T-cell (primary cell): ENCODE measurements at regions of chr6 and their contacts with region 1.

Region 1: GRCh38 chr6:111716325-111716724 is 110.6 kb upstream of the TRAF3IP2 start:
- DNase-seq: no peak
- ATAC-seq: no peak
- H3K4me3 ChIP-seq: no peak overlapping the region
- H3K4me3 Mint-ChIP-seq: no peak overlapping the region
- H3K27ac ChIP-seq: peak overlapping the region; percentile 67
- H3K27ac Mint-ChIP-seq: peak overlapping the region; percentile 78 to 79
- H3K4me1 ChIP-seq: peaks cover 33 to 63% of the 10 kb centered on the region in 2 experiments
- H3K4me1 Mint-ChIP-seq: peaks cover 64 to 84% (median 83%) of the 10 kb centered on the region in 3 donors
- H3K27me3 ChIP-seq: no peaks in the 10 kb centered on the region
- H3K27me3 Mint-ChIP-seq: no peaks in the 10 kb centered on the region

Region 2: GRCh38 chr6:111818539-111819226 is 102.4 kb after region 1 on chr6:
- CTCF ChIA-PET with region 1: no interaction called
- POLR2A ChIA-PET with region 1: no interaction called
- DNase-seq: peak in 1 of 35 experiments; percentile 43
- ATAC-seq: peak; percentile 46 to 69 (median 60)
- H3K4me3 ChIP-seq: no peak overlapping the region
- H3K4me3 Mint-ChIP-seq: peak overlapping the region; percentile 10 to 52 (median 32)
- H3K27ac ChIP-seq: peak overlapping the region; percentile 40
- H3K27ac Mint-ChIP-seq: peak overlapping the region; percentile 71 to 89
- H3K4me1 ChIP-seq: peaks cover 29 to 33% of the 10 kb centered on the region in 2 experiments
- H3K4me1 Mint-ChIP-seq: peaks cover 63 to 76% (median 71%) of the 10 kb centered on the region in 3 donors
- H3K27me3 ChIP-seq: no peaks in the 10 kb centered on the region
- H3K27me3 Mint-ChIP-seq: no peaks in the 10 kb centered on the region

Region 3: GRCh38 chr6:111985202-111985731 is 268.9 kb after region 1 on chr6:
- CTCF ChIA-PET with region 1: no interaction called
- POLR2A ChIA-PET with region 1: no interaction called
- DNase-seq: peak in 7 of 35 experiments; percentile 5 to 67 (median 21)
- ATAC-seq: peak; percentile 28 to 65 (median 56)
- H3K4me3 ChIP-seq: no peak overlapping the region
- H3K4me3 Mint-ChIP-seq: peak overlapping the region in 2 of 3 donors; percentile 2 to 32
- H3K27ac ChIP-seq: peak overlapping the region; percentile 50
- H3K27ac Mint-ChIP-seq: peak overlapping the region; percentile 51 to 86
- H3K4me1 ChIP-seq: peaks cover 58 to 65% of the 10 kb centered on the region in 2 experiments
- H3K4me1 Mint-ChIP-seq: peaks cover 90 to 95% (median 91%) of the 10 kb centered on the region in 3 donors
- H3K27me3 ChIP-seq: no peaks in the 10 kb centered on the region
- H3K27me3 Mint-ChIP-seq: no peaks in the 10 kb centered on the region

Region 4: DNA sequence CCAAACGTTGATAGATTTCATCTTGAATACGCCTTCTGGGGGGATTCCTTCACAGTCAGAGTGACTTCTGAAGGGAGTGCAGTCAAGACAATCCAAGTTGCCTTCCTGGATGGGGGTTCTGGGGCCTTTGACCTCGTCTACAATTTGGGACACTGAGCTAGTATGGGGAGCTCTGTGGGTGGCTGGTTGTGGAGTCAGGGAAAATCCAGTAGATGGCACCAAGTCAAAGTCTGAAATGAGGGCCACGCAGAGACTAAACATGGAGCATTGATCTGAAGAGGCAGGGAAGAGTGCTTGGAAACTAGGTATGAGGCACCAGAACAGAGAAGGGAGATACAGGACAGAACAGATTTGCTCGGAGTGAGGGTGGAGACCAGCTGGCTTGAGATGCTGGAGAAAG is 294.0 kb after region 1 on chr6:
- CTCF ChIA-PET with region 1: interaction called in 1 of 2 experiments, 7 read pairs
- POLR2A ChIA-PET with region 1: interaction called in 1 of 2 experiments, 10 read pairs
- DNase-seq: peak in 2 of 35 experiments; percentile 43 to 58
- ATAC-seq: peak; percentile 73 to 89 (median 86)
- H3K4me3 ChIP-seq: no peak overlapping the region
- H3K4me3 Mint-ChIP-seq: no peak overlapping the region
- H3K27ac ChIP-seq: no peak overlapping the region
- H3K27ac Mint-ChIP-seq: peak overlapping the region in 1 of 2 donors; percentile 2
- H3K4me1 ChIP-seq: peaks cover 2 to 3% of the 10 kb centered on the region in 2 experiments
- H3K4me1 Mint-ChIP-seq: peaks cover 9 to 13% (median 9%) of the 10 kb centered on the region in 3 donors
- H3K27me3 ChIP-seq: no peaks in the 10 kb centered on the region
- H3K27me3 Mint-ChIP-seq: no peaks in the 10 kb centered on the region

Region 5: DNA sequence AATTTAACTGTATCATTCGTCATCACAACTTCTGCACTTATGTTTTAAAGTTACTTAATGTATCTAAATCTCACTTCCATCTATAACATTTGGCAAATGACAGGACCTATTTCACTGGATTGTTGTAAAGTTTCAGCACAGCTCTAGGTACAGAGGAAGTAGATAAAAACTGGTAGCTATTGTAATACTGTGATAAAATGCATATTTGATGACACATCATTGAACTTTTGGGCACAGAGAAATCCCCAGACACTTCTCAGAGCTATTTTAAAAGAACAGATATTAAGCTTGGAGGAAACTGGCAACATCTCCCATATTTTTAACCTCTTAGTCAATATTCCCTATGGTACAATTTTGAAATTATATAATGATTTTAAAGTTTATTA is 769.5 kb after region 1 on chr6:
- CTCF ChIA-PET with region 1: no interaction called
- POLR2A ChIA-PET with region 1: no interaction called
- DNase-seq: no peak
- ATAC-seq: no peak
- H3K4me3 ChIP-seq: no peak overlapping the region
- H3K4me3 Mint-ChIP-seq: no peak overlapping the region
- H3K27ac ChIP-seq: no peak overlapping the region
- H3K27ac Mint-ChIP-seq: no peak overlapping the region
- H3K4me1 ChIP-seq: no peaks in the 10 kb centered on the region
- H3K4me1 Mint-ChIP-seq: no peaks in the 10 kb centered on the region
- H3K27me3 ChIP-seq: peaks cover 0 to 2% of the 10 kb centered on the region in 2 experiments
- H3K27me3 Mint-ChIP-seq: peaks cover 0 to 5% of the 10 kb centered on the region in 2 donors